ENCODE measurements at regions of chr16 and their contacts with region 1.

Region 1: DNA sequence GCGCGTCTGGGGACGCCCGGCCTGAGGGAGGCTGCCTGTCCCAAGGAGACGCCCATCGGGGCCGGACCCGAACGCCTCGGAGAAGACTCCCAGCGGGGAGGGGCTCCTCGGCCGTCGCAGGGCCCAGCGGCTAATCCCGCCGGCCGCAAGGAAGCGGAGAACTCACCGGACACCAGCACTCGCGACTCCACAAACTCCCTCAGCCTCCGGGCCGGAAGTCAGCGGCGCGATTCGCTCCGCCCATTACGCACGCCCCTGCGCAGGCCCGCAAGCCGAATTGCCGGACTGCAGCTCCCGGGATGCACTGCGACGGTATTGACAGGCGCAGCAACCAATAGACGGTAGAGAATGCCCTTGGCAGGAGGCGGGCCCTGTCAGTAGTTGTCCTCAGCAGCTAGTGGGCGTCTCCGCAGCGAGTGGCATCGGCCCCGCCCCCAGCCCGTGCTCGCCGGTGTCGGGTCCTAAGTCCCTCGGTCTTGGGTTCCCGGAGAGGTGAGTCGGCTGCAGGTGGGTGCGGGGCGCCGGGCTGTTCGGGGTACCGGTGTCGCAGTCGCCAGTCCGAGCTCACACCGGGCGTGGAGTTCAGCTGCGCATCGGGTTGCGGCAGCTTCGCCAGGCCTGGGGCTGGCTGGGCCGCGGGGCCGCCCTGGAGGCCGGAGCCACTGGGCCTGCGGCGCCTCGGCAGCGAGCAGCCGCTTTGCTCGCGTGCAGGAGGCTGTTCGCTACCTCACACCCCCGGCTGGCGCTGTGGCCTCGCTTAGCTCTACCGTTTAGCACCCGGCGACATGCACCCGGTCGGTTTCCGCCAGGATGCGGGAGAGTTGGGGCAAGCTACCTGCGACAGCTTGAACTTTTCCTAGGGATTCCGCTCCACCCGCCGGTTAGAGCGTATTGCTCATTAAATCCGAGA is at the starts of genes ZNF174 and ZSCAN32:
- DNase-seq: peak; percentile 99
- ATAC-seq: peak; percentile 98
- H3K4me3 ChIP-seq: peak within 1 kb of the TSS; percentile 93
- H3K27ac ChIP-seq: peak within 1 kb of the TSS; percentile 71
- H3K4me1 ChIP-seq: peaks cover 4% of the 10 kb centered on the region; the same call in 1 of the 2 replicates
- H3K27me3 ChIP-seq: no peaks in the 10 kb centered on the region
- CTCF ChIP-seq: no peak
- EP300 ChIP-seq: no peak
- POLR2A ChIP-seq: peak; percentile 90
- RAD21 ChIP-seq: no peak
- polyA plus RNA-seq, gene ZNF174: 3.0 to 4.7 TPM
- polyA plus RNA-seq, gene ZSCAN32: 12.8 to 15.2 TPM

Region 2: DNA sequence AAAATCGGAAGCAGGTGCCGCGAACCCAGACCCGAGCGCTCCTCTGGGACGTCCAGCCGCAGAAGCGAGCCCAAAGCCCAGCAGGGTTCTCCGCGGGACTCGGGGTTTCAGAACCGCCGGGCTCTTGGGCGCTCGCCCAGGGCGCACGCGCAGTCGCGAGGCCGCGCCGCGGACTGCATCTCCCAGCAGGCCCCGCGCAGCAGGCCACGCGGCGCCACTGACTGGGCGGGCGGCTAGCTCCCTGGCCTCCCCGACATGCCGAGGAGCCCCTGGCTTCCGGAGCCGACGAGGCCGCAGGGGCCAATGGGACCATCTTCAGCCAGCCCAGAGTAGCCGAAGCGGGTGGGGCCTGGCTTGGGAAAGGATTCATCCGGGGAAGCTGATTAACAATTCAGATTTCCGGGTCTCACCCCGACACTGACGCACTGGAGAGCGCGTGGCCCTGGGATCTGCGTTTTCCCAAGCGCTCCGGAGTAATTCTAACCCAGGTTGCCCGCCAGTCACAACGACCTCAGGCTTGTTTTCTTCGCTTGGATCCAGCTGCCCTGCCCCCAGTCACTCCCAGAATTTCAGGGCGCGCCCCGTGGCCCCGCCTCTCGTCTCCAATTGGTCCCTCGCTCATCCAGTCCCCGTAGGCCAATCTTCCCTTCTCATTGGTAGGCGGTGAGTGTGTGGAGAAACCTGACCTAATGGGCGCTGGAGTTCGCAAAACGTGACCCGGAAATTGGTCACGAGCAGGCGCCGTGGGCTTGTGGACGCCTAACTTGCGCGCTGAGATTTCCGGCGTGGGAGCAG is 118.1 kb before region 1 on chr16 and contains the start of gene ZNF263:
- CTCF ChIA-PET with region 1: interaction called, 4 read pairs
- POLR2A ChIA-PET with region 1: interaction called, 4 read pairs
- RAD21 ChIA-PET with region 1: interaction called, 4 read pairs
- SMC1A ChIA-PET with region 1: interaction called, 5 read pairs
- in situ Hi-C with region 1: no loop called
- intact Hi-C with region 1: loop called (anchors 10 kb)
- DNase-seq: peak; percentile 88
- ATAC-seq: peak; percentile 95
- H3K4me3 ChIP-seq: peak within 1 kb of the TSS; percentile 91
- H3K27ac ChIP-seq: peak within 1 kb of the TSS; percentile 98
- H3K4me1 ChIP-seq: peaks cover 10% of the 10 kb centered on the region; the same call in 1 of the 2 replicates
- H3K27me3 ChIP-seq: no peaks in the 10 kb centered on the region
- CTCF ChIP-seq: no peak
- EP300 ChIP-seq: no peak; a peak in 1 of 4 replicates
- POLR2A ChIP-seq: peak; percentile 71
- RAD21 ChIP-seq: no peak
- polyA plus RNA-seq, gene ZNF263: 4.7 to 5.3 TPM

Region 3: DNA sequence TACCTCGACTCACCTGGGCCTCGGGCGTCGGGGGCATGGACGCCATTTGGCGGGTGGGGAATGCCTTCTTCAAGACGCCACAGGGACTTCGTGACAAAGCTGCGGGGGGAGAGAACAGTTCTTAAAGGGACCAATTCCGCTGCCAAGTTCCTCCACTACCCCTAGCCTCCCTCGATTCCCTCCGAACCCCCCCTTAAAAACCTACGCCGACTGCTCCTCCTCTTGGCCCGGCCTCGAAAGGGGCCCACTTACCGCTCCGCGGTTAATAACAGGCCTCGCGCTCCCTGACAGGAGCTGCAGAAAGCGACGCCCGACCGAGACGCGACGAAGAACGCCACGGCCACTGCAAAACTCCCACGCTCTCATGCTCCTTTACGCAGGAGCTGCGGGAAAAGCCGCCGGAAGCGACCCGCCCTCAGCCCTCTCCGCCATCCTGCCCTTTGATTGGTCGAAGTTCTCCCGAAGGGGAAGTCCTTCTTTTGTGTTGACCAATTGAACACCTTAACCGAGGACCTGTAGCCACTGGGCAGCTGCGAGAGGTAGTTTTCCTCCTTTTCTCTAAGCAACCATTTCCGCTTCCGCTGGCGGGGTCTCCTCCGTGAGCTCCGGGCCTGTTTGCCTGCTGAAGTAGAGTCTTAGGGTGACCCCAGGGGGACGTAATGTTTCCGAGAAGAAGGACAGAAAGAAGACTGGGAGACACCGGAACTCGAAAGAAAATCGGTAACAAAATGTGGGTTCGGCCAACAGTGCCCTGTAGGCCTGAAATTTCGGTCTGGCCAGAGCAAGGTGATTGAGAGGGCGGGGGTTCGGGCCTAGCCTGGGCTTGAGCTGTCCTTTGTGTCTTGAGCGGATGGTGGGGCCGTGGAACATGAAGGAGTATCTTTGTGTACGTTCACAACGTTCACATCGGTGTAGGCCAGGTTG is 42.3 kb after region 1 on chr16 and contains the starts of genes NAA60 and ZNF597:
- CTCF ChIA-PET with region 1: interaction called, 4 read pairs
- POLR2A ChIA-PET with region 1: interaction called, 9 read pairs
- RAD21 ChIA-PET with region 1: interaction called, 6 read pairs
- SMC1A ChIA-PET with region 1: interaction called, 11 read pairs
- in situ Hi-C with region 1: no loop called
- intact Hi-C with region 1: no loop called
- DNase-seq: peak; percentile 74
- ATAC-seq: peak; percentile 99
- H3K4me3 ChIP-seq: peak within 1 kb of the TSS; percentile 74
- H3K27ac ChIP-seq: peak within 1 kb of the TSS; percentile 75
- H3K4me1 ChIP-seq: no peaks in the 10 kb centered on the region
- H3K27me3 ChIP-seq: no peaks in the 10 kb centered on the region
- CTCF ChIP-seq: no peak
- EP300 ChIP-seq: no peak
- POLR2A ChIP-seq: peak; percentile 85
- RAD21 ChIP-seq: peak; percentile 23; the same call in 1 of the 2 replicates
- polyA plus RNA-seq, gene NAA60: 6.2 to 9.1 TPM
- polyA plus RNA-seq, gene ZNF597: 0.80 to 0.85 TPM

Region 4: DNA sequence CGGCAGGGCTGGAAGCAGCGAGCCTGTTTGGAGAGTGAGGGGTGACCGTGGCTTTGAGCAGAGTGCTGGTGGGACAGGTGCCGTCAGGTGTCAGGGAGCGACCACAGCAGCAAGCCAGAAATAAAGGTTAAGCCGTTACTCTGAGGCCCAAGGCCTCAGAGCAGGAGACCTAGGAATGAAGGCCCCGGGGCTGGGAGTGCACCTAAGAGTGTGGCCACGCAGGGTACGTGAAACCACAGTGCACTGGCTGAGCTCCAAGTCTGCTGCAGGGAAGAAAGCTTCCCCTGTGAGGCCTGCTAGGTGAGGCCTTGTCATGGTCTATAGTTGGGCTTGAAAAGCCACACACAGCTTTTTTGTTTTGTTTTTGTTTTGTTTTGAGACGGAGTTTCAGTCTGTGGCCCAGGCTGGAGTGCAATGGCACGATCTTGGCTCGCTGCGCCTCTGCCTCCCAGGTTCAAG is 108.5 kb after region 1 on chr16:
- CTCF ChIA-PET with region 1: no interaction called
- POLR2A ChIA-PET with region 1: no interaction called
- RAD21 ChIA-PET with region 1: no interaction called
- SMC1A ChIA-PET with region 1: no interaction called
- in situ Hi-C with region 1: no loop called
- intact Hi-C with region 1: loop called (anchors 10 kb)
- DNase-seq: peak; percentile 84
- ATAC-seq: peak; percentile 98
- H3K4me3 ChIP-seq: 0 out of 2 replicates have a peak overlapping the region, but pooled peaks have one; percentile 6
- H3K27ac ChIP-seq: peak overlapping the region; percentile 35
- H3K4me1 ChIP-seq: peaks cover 12% of the 10 kb centered on the region
- H3K27me3 ChIP-seq: no peaks in the 10 kb centered on the region
- CTCF ChIP-seq: no peak
- EP300 ChIP-seq: 0 out of 4 replicates have a peak, but pooled peaks of 1 of the 2 experiments have one; percentile 20
- POLR2A ChIP-seq: no peak
- RAD21 ChIP-seq: no peak

Measured in GM12878 (cell line).